ENCODE measurements at regions of chr4 and their contacts with region 1.

Region 1: GRCh38 chr4:80610845-80611677 is 275.5 kb downstream of the CFAP299 start:
- DNase-seq: no peak
- H3K4me3 ChIP-seq: no peak overlapping the region
- H3K4me3 Mint-ChIP-seq: no peak overlapping the region
- H3K27ac Mint-ChIP-seq: no peak overlapping the region
- H3K4me1 ChIP-seq: no peaks in the 10 kb centered on the region
- H3K4me1 Mint-ChIP-seq: no peaks in the 10 kb centered on the region
- H3K27me3 ChIP-seq: no peaks in the 10 kb centered on the region
- H3K27me3 Mint-ChIP-seq: peaks cover 9% of the 10 kb centered on the region
- CTCF ChIP-seq: no peak

Region 2: GRCh38 chr4:80989921-80990544 is 379.0 kb after region 1 on chr4:
- CTCF ChIA-PET with region 1: no interaction called
- POLR2A ChIA-PET with region 1: no interaction called
- intact Hi-C with region 1: loop called (anchors 10 kb)
- DNase-seq: peak in 1 of 2 experiments; percentile 43
- H3K4me3 ChIP-seq: no peak overlapping the region
- H3K4me3 Mint-ChIP-seq: no peak overlapping the region
- H3K27ac Mint-ChIP-seq: no peak overlapping the region
- H3K4me1 ChIP-seq: no peaks in the 10 kb centered on the region
- H3K4me1 Mint-ChIP-seq: no peaks in the 10 kb centered on the region
- H3K27me3 ChIP-seq: no peaks in the 10 kb centered on the region
- H3K27me3 Mint-ChIP-seq: peaks cover 9% of the 10 kb centered on the region
- CTCF ChIP-seq: peak; percentile 63 to 64